Breast epithelium (tissue), 4 donors: ENCODE measurements at regions of chr17 and their contacts with region 1.

Region 1: GRCh38 chr17:21164211-21164610 is 37.4 kb downstream of the DHRS7B start:
- DNase-seq: no peak
- H3K4me3 ChIP-seq: no peak overlapping the region
- H3K27ac ChIP-seq: no peak overlapping the region
- H3K4me1 ChIP-seq: no peaks in the 10 kb centered on the region
- H3K27me3 ChIP-seq: no peaks in the 10 kb centered on the region
- CTCF ChIP-seq: peak in 1 of 3 donors; percentile 18
- POLR2A ChIP-seq: no peak

Region 2: DNA sequence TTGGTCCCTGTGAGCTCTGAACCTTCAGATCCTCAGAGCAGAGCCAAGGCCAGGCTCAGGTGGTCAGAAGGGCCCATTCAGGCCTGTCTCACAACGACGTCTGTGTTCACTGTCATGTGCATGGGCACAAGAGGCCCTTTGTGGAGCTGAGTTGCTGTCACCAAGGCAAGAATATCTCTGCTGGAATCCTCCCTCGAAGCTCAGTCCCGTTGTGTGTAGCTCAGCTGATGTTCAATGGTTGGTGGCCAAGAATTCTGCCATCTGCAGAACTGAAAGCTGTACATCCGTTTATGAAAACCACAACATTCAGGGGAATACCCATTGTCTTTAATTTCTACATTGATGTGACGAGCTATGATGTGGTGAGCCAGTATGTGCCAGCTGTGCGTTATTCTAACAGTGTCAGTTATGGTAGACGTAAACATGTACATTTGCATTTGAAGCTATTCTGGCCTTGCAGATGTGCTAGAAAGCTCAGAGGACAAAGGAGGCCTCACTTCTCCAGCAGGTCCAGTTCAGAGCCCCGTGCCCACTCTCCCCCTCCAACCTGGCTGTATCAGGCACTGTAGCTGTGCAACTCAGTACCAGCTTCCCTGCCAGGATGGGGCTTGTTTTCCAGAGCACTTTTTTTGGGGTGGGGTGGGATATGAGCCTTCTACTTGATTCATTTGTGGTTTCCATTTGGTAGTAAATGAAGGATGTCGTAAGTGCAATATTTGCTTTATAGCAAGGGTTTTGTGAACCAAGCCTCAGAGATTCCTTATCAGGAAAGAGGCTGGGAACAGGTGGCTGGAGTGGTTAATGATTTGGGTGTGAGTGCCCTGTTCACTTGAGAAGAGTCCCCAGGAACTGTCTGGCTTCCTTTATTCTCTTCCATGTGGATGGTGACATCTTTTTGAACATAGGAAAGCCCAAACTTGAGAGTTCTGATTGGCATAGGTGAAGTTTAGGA is 1857.8 kb before region 1 on chr17:
- intact Hi-C with region 1: no loop called
- DNase-seq: no peak
- H3K4me3 ChIP-seq: no peak overlapping the region
- H3K27ac ChIP-seq: no peak overlapping the region
- H3K4me1 ChIP-seq: no peaks in the 10 kb centered on the region
- H3K27me3 ChIP-seq: no peaks in the 10 kb centered on the region
- CTCF ChIP-seq: no peak
- POLR2A ChIP-seq: no peak

Region 3: GRCh38 chr17:21186399-21187187 is 22.4 kb after region 1 on chr17:
- intact Hi-C with region 1: loop called (anchors 1 kb)
- DNase-seq: no peak
- H3K4me3 ChIP-seq: no peak overlapping the region
- H3K27ac ChIP-seq: peak overlapping the region in 1 of 2 donors; percentile 75
- H3K4me1 ChIP-seq: no peaks in the 10 kb centered on the region
- H3K27me3 ChIP-seq: no peaks in the 10 kb centered on the region
- CTCF ChIP-seq: no peak
- POLR2A ChIP-seq: no peak